ENCODE measurements at regions of chr12 and their contacts with region 1.

Region 1: GRCh38 chr12:133080368-133081158 is at the start of gene ZNF140:
- DNase-seq: peak; percentile 95 to 98 (median 96)
- ATAC-seq: peak; percentile 80
- H3K4me3 ChIP-seq: peak within 1 kb of the TSS; percentile 24 to 85
- H3K27ac ChIP-seq: peak within 1 kb of the TSS; percentile 88 to 98 (median 95)
- H3K4me1 ChIP-seq: peaks cover 20% of the 10 kb centered on the region
- H3K27me3 ChIP-seq: no peaks in the 10 kb centered on the region
- CTCF ChIP-seq: peak in 4 of 7 experiments; percentile 35 to 50 (median 46)
- POLR2A ChIP-seq: peak; percentile 53 to 79 (median 77)
- total RNA-seq, gene ZNF140: 12.9 to 14.3 TPM

Region 2: DNA sequence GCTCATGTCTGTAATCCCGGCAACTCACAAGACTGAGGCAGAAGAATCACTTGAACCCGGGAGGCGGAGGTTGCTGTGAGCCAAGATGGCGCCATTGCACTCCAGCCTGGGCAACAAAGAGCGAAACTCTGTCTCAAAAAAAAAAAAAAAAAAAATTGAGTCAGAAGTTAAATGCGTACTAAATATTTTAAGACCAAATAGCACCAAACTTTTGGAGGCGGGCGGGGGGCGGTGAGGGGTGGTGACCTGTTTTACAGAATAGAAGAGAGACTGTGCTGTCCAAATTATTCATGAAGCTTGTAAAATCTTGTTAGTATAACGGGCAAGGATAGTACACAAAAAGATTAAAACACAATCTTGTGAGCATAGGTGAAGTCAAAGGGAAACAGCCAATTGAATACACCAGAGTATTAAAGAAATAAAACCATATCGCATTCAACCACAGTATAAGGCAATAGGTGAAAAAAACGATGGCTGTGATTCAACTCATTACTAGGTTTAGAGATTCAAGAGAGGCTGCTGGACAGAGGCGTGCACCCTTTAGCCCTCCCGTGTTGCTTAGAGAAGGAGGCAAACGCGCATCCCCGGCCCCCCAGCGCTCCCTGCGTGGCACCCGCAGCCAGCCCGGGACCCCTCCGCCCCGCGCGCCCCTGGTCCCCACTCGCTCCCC is 48.9 kb after region 1 on chr12:
- intact Hi-C with region 1: loop called (anchors 5 kb)
- DNase-seq: peak in 1 of 4 donors; percentile 22
- ATAC-seq: peak; percentile 2
- H3K4me3 ChIP-seq: peak overlapping the region; percentile 62 to 87
- H3K27ac ChIP-seq: peak overlapping the region; percentile 79 to 96 (median 90)
- H3K4me1 ChIP-seq: peaks cover 12% of the 10 kb centered on the region
- H3K27me3 ChIP-seq: no peaks in the 10 kb centered on the region
- CTCF ChIP-seq: no peak
- POLR2A ChIP-seq: no peak

Measured in body of pancreas (tissue), 4 donors.